MCF 10A (cell line): ENCODE measurements at regions of chr19 and their contacts with region 1.

Region 1: DNA sequence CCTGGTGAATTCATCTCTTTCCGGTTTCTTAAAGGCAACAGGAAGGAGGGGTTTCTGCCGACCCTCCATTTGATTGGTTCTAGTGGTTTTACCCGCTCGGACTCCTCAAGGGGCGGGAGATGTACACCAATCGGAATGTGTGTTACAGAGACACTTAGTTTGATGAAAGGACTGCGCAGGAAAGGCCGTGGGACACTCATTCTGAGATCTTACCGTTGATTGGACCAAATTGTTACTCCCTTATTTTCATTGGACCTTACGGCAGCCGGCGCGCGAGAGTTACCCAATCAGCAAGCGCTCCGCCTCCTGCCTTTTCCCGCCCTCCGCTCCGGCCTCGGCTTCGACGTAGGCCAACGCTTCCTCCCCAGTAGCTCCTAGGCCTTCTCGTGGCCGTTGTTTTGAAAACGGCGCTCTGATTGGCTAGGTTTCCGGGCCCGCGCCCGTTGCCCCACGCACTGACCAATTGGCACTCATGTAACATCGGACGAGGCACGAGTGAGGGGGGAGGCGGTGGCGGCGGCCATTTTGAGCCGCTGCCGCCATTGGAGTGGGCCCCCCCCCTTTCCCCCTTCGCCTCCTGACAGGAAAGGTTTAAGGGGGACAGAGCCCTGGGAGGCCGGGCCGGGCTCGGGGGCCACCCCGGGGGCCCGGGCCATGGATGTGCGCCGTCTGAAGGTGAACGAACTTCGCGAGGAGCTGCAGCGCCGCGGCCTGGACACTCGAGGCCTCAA is at the start of gene HNRNPUL1:
- DNase-seq: peak; percentile 100
- H3K4me3 Mint-ChIP-seq: peak within 1 kb of the TSS; percentile 89
- H3K27ac Mint-ChIP-seq: peak within 1 kb of the TSS; percentile 100
- H3K4me1 Mint-ChIP-seq: peaks cover 42% of the 10 kb centered on the region
- H3K27me3 Mint-ChIP-seq: no peaks in the 10 kb centered on the region
- CTCF ChIP-seq: peak; percentile 25
- total RNA-seq, gene HNRNPUL1: 179 and 204 TPM in 2 replicates

Region 2: GRCh38 chr19:40662921-40663694 is 600.9 kb before region 1 on chr19:
- CTCF ChIA-PET with region 1: interaction called, 3 read pairs
- POLR2A ChIA-PET with region 1: interaction called, 3 read pairs
- intact Hi-C with region 1: loop called (anchors 5 kb)
- DNase-seq: peak; percentile 83
- H3K4me3 Mint-ChIP-seq: peak overlapping the region; percentile 77
- H3K27ac Mint-ChIP-seq: peak overlapping the region; percentile 57
- H3K4me1 Mint-ChIP-seq: peaks cover 14% of the 10 kb centered on the region
- H3K27me3 Mint-ChIP-seq: no peaks in the 10 kb centered on the region
- CTCF ChIP-seq: peak; percentile 96

Region 3: GRCh38 chr19:40777937-40778705 is 485.9 kb before region 1 on chr19 and contains the start of gene RAB4B:
- CTCF ChIA-PET with region 1: no interaction called
- POLR2A ChIA-PET with region 1: interaction called, 14 read pairs
- intact Hi-C with region 1: no loop called
- DNase-seq: peak; percentile 100
- H3K4me3 Mint-ChIP-seq: peak within 1 kb of the TSS; percentile 83
- H3K27ac Mint-ChIP-seq: peak within 1 kb of the TSS; percentile 86
- H3K4me1 Mint-ChIP-seq: peaks cover 25% of the 10 kb centered on the region
- H3K27me3 Mint-ChIP-seq: no peaks in the 10 kb centered on the region
- CTCF ChIP-seq: no peak
- total RNA-seq, gene RAB4B: 10.1 and 13.2 TPM in 2 replicates

Region 4: DNA sequence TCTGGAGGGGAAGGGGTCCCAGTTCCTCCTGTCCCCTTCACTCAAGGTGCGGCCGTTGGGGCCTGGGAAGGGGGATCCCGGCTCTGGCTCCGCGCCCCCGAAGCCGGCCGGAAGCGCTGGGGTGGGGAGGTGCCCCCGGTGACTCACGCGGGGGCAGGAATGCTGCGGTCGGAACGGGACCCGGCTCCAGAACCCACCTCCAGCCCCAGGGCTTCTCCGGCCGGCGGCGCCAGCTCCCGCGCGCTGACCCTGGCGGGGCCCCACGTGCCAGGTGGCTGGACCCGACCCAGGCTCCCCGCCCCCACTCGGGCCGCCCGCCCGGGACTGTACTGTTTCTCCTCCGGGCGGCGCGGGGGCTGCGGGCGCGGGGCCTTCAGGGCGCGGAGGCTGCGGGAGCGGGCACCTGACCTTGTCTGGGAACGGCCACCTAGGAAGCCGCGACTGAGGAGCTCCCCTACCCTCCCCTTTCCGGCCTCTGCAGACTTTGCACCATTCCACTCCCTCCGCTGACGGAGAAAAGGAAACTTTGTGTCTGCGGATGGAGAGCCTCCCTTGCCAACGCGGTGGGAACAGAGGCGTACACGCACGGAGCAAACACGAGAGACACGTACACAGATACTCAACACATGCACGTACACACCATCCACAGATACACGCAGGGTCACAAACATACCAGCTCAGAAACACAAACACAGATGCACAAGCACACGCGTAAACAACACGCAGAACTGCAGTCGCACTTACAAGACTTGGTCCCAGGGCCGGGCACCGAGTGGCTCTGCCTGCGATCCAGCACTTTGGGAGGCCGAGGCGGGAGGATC is 37.8 kb before region 1 on chr19:
- CTCF ChIA-PET with region 1: interaction called, 4 read pairs
- POLR2A ChIA-PET with region 1: interaction called, 345 read pairs
- intact Hi-C with region 1: no loop called
- DNase-seq: peak; percentile 91
- H3K4me3 Mint-ChIP-seq: peak overlapping the region; percentile 74
- H3K27ac Mint-ChIP-seq: peak overlapping the region; percentile 92
- H3K4me1 Mint-ChIP-seq: peaks cover 47% of the 10 kb centered on the region
- H3K27me3 Mint-ChIP-seq: no peaks in the 10 kb centered on the region
- CTCF ChIP-seq: no peak

Region 5: GRCh38 chr19:41334793-41335192 is 70.8 kb after region 1 on chr19:
- CTCF ChIA-PET with region 1: no interaction called
- POLR2A ChIA-PET with region 1: no interaction called
- intact Hi-C with region 1: no loop called
- DNase-seq: no peak
- H3K4me3 Mint-ChIP-seq: no peak overlapping the region
- H3K27ac Mint-ChIP-seq: no peak overlapping the region
- H3K4me1 Mint-ChIP-seq: peaks cover 6% of the 10 kb centered on the region
- H3K27me3 Mint-ChIP-seq: no peaks in the 10 kb centered on the region
- CTCF ChIP-seq: no peak

Region 6: DNA sequence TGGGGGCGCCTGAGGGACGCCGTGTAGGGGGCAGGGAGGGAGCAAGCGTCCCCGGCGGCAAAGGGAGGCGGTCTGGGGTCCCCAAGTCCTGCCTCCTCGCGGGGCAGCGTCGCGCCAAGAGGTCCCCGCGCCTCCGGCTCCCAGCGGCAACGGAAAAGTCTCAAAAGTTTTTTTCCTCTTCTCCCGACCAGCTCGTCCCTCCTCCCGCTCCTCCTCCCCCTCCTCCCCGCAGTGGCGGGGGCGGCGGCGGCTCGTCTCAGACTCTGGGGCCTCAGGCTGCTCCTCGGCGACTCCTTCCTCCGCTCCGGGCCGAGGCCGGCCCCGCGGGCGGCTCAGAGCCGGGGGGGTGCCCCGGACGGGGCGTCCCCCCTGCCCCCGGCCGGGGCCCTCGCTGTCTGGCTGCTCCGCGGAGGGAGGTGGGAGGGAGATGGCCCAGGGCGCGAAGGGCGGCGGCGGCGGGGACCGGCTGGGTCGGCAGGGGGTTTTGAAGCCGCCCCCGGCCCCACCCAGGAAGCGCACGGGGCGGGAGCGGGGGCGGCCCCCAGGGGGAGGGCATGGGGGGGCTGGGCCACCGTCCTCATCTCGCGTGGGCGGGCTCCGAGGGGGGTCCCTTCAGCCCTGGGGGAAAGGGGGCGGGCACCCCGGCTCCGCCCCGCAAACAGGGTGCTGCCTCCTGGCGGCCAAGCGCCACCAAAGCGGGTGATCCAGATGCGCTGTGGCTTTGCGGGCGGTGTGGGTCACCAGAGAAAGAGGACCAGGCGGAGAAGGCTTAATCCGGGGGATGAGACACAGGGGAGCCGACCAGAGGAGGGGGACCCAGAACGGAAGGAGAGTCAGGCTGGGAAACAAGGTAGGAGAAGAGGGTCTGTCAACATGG is 89.7 kb after region 1 on chr19 and contains the start of gene TGFB1:
- CTCF ChIA-PET with region 1: no interaction called
- POLR2A ChIA-PET with region 1: interaction called, 9 read pairs
- intact Hi-C with region 1: loop called (anchors 5 kb)
- DNase-seq: peak; percentile 84
- H3K4me3 Mint-ChIP-seq: peak within 1 kb of the TSS; percentile 98
- H3K27ac Mint-ChIP-seq: no peak within 1 kb of the TSS
- H3K4me1 Mint-ChIP-seq: peaks cover 24% of the 10 kb centered on the region
- H3K27me3 Mint-ChIP-seq: no peaks in the 10 kb centered on the region
- CTCF ChIP-seq: peak; percentile 92
- total RNA-seq, gene TGFB1: 27.8 and 33.7 TPM in 2 replicates

Region 7: GRCh38 chr19:41859618-41860418 is 595.8 kb after region 1 on chr19 and contains the start of gene RPS19:
- CTCF ChIA-PET with region 1: interaction called, 3 read pairs
- POLR2A ChIA-PET with region 1: interaction called, 14 read pairs
- intact Hi-C with region 1: no loop called
- DNase-seq: peak; percentile 100
- H3K4me3 Mint-ChIP-seq: peak within 1 kb of the TSS; percentile 82
- H3K27ac Mint-ChIP-seq: peak within 1 kb of the TSS; percentile 97
- H3K4me1 Mint-ChIP-seq: peaks cover 20% of the 10 kb centered on the region
- H3K27me3 Mint-ChIP-seq: peaks cover 7% of the 10 kb centered on the region
- CTCF ChIP-seq: peak; percentile 55
- total RNA-seq, gene RPS19: 3,060 and 3,357 TPM in 2 replicates